ENCODE measurements at regions of chr11 and their contacts with region 1.

Region 1: GRCh38 chr11:117817368-117818040 is 7.0 kb downstream of the FXYD2 start:
- DNase-seq: peak; percentile 81
- H3K4me3 Mint-ChIP-seq: no peak overlapping the region
- H3K27ac Mint-ChIP-seq: peak overlapping the region; percentile 84
- H3K4me1 Mint-ChIP-seq: peaks cover 61% of the 10 kb centered on the region
- H3K27me3 Mint-ChIP-seq: no peaks in the 10 kb centered on the region
- CTCF ChIP-seq: peak; percentile 85

Region 2: DNA sequence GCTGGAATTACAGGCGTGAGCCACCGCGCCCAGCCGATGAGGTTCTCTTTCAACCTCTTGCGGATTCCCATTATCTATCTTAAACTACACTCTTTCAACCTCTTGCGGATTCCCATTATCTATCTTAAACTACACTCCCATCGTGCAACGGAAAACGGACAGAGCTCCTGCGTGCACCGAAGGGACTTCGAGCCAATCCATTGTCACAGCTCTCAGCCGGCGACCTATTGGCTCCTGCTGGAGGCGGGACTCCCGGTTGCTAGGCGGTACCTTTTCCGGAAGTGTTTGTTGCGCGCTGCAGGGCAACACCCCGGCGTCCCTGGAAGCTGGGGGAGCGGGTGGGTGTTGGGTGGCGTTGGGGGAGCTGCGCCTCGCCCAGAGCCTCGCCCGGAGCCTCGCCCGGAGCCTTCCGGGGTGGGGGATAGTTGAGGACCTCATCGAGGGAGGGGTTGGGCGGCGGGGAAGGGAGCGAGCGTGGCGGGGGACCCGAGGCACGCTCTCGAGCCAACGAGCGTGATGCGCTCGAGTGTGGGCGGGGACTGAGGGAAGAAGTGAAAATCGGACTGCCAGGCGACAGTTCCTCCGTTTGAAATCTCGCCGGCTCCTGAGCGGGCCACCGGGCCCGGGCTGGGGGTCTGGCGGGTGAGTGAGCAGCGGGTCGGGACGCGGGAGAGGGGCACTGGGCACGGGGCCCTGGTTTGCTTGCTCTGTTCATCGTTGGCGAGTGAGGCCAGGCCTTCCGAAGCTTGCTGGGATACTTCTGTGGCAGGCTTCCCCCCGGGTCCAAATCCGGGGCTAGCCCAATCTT is 489.7 kb before region 1 on chr11 and contains the start of gene CEP164:
- CTCF ChIA-PET with region 1: no interaction called
- intact Hi-C with region 1: no loop called
- DNase-seq: peak; percentile 89
- H3K4me3 Mint-ChIP-seq: no peak within 1 kb of the TSS
- H3K27ac Mint-ChIP-seq: no peak within 1 kb of the TSS
- H3K4me1 Mint-ChIP-seq: no peaks in the 10 kb centered on the region
- H3K27me3 Mint-ChIP-seq: no peaks in the 10 kb centered on the region
- CTCF ChIP-seq: no peak
- total RNA-seq, gene CEP164: 25.4 and 29.6 TPM in 2 replicates

Region 3: DNA sequence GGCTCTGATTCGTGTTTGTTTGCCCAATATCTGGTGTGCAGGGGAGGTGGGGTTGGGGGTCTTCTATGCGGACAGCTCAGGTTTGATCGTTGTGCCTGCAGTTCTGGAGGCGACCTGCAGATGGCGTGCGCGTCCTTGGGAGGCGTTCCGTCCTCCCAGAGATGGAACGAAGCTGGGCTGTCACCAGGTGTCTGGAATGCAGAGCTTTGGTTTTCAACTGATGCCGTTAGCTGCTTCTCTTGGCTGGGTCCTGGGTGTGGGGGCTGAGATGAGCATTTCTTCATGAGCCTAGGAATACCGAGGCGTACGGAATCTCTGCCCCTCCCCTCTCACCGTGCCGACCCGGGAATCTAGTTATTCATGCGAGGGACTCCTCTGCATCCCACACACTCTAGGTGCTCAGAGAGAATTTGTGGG is 391.2 kb before region 1 on chr11:
- CTCF ChIA-PET with region 1: interaction called, 21 read pairs
- intact Hi-C with region 1: loop called (anchors 5 kb)
- DNase-seq: peak; percentile 67
- H3K4me3 Mint-ChIP-seq: no peak overlapping the region
- H3K27ac Mint-ChIP-seq: no peak overlapping the region
- H3K4me1 Mint-ChIP-seq: no peaks in the 10 kb centered on the region
- H3K27me3 Mint-ChIP-seq: peaks cover 77% of the 10 kb centered on the region
- CTCF ChIP-seq: peak; percentile 87

Region 4: GRCh38 chr11:117876341-117877119 is 59.0 kb after region 1 on chr11 and contains the start of gene FXYD6:
- CTCF ChIA-PET with region 1: no interaction called
- intact Hi-C with region 1: no loop called
- DNase-seq: no peak
- H3K4me3 Mint-ChIP-seq: peak within 1 kb of the TSS; percentile 71
- H3K27ac Mint-ChIP-seq: no peak within 1 kb of the TSS
- H3K4me1 Mint-ChIP-seq: peaks cover 8% of the 10 kb centered on the region
- H3K27me3 Mint-ChIP-seq: peaks cover 100% of the 10 kb centered on the region
- CTCF ChIP-seq: no peak
- total RNA-seq, gene FXYD6: 0.61 and 0.78 TPM in 2 replicates

Region 5: DNA sequence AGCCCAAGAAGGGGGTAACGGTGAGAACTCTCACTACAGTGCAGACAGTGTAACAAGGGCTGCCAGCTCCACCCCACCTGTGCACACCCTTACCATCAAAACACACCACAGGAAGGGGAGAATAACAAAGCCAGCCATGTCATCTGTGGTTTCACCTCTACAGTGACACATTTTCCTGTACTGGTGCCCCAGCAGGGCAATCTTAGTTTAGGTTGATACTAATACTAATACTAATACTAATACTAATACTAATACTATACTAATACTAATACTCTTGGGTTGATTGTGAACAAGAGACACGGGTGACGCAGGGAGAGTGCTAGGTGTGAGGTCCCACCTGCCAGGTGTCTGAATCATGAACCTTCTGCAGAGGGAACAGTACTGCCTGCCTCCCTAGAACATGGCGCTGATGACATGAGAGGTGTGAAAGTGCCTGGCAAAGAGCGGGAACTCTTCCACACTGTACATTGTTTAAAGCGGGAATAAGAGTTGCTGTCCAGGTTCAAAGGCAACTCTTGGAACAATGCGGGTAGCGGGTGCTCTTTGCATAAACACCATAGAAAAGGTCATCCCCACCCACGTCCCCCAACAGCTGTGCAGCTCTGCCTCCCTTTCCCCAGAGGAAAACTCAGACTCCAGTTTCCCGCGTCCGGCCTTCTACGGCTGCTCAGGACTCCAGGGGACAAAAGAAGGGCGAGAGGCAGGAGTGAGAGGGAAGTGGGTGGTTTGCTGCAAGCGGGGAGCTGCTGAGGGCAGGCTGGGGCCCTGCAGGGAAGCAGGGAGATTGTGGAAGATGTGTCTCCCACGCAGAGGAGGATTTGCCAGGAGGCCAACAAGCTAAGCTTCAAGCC is 234.3 kb after region 1 on chr11:
- CTCF ChIA-PET with region 1: interaction called, 17 read pairs
- intact Hi-C with region 1: loop called (anchors 1 kb)
- DNase-seq: no peak
- H3K4me3 Mint-ChIP-seq: no peak overlapping the region
- H3K27ac Mint-ChIP-seq: no peak overlapping the region
- H3K4me1 Mint-ChIP-seq: no peaks in the 10 kb centered on the region
- H3K27me3 Mint-ChIP-seq: peaks cover 21% of the 10 kb centered on the region
- CTCF ChIP-seq: no peak

Measured in Calu3 (cell line).